PC-9 (cell line): ENCODE measurements at regions of chr12 and their contacts with region 1.

Region 1: GRCh38 chr12:27975244-27976136 is 3.0 kb upstream of the PTHLH start:
- DNase-seq: peak in 1 of 2 experiments; percentile 42
- H3K4me3 ChIP-seq: peak overlapping the region; percentile 51; the same call in 1 of the 2 replicates
- H3K27ac ChIP-seq: no peak overlapping the region
- H3K4me1 ChIP-seq: no peaks in the 10 kb centered on the region
- H3K27me3 ChIP-seq: no peaks in the 10 kb centered on the region
- CTCF ChIP-seq: no peak

Region 2: GRCh38 chr12:27644158-27644845 is 331.2 kb before region 1 on chr12:
- CTCF ChIA-PET with region 1: no interaction called
- POLR2A ChIA-PET with region 1: no interaction called
- intact Hi-C with region 1: no loop called
- DNase-seq: no peak
- H3K4me3 ChIP-seq: no peak overlapping the region
- H3K27ac ChIP-seq: no peak overlapping the region
- H3K4me1 ChIP-seq: peaks cover 5% of the 10 kb centered on the region; the same call in 1 of the 2 replicates
- H3K27me3 ChIP-seq: no peaks in the 10 kb centered on the region
- CTCF ChIP-seq: no peak

Region 3: GRCh38 chr12:28172434-28173030 is 197.0 kb after region 1 on chr12:
- CTCF ChIA-PET with region 1: no interaction called
- POLR2A ChIA-PET with region 1: no interaction called
- intact Hi-C with region 1: no loop called
- DNase-seq: peak in 1 of 2 experiments; percentile 31
- H3K4me3 ChIP-seq: no peak overlapping the region
- H3K27ac ChIP-seq: no peak overlapping the region
- H3K4me1 ChIP-seq: no peaks in the 10 kb centered on the region
- H3K27me3 ChIP-seq: no peaks in the 10 kb centered on the region
- CTCF ChIP-seq: peak; percentile 72

Region 4: GRCh38 chr12:28190321-28191050 is 215.0 kb after region 1 on chr12 and contains the start of gene CCDC91:
- CTCF ChIA-PET with region 1: no interaction called
- POLR2A ChIA-PET with region 1: interaction called, 11 read pairs
- intact Hi-C with region 1: no loop called
- DNase-seq: peak; percentile 67 to 92
- H3K4me3 ChIP-seq: peak within 1 kb of the TSS; percentile 66
- H3K27ac ChIP-seq: peak within 1 kb of the TSS; percentile 95
- H3K4me1 ChIP-seq: peaks cover 26% of the 10 kb centered on the region
- H3K27me3 ChIP-seq: no peaks in the 10 kb centered on the region
- CTCF ChIP-seq: no peak
- total RNA-seq, gene CCDC91: 30.7 and 38.9 TPM in 2 replicates